ENCODE measurements at regions of chr18 and their contacts with region 1.

Region 1: GRCh38 chr18:59899298-59900221 is at the start of gene PMAIP1:
- DNase-seq: peak; percentile 96
- H3K4me3 Mint-ChIP-seq: peak within 1 kb of the TSS; percentile 95
- H3K27ac Mint-ChIP-seq: peak within 1 kb of the TSS; percentile 99
- H3K4me1 Mint-ChIP-seq: peaks cover 35% of the 10 kb centered on the region
- H3K27me3 Mint-ChIP-seq: no peaks in the 10 kb centered on the region
- total RNA-seq, gene PMAIP1: 52.5 and 54.6 TPM in 2 replicates

Region 2: DNA sequence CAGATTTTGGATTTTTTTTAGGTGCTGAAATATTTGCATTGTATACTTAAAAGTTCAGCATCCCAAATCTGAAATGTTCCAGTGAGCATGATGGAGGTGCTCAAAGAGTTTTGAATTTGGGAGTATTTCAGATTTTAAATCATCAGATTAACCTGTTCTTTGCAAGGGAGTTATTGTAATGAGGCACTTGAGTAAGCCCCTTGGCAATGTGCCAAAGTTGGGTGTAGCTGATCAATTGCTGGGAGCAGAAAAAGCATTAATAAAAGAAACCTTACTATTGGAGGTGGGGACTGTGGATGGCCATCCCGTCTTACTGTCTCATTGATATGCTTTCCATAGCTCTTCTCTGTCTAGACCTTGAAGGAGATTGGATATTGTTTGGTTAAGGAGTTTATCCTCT is 1200.0 kb before region 1 on chr18:
- intact Hi-C with region 1: loop called (anchors 10 kb)
- DNase-seq: peak; percentile 49
- H3K4me3 Mint-ChIP-seq: no peak overlapping the region
- H3K27ac Mint-ChIP-seq: no peak overlapping the region
- H3K4me1 Mint-ChIP-seq: peaks cover 34% of the 10 kb centered on the region
- H3K27me3 Mint-ChIP-seq: no peaks in the 10 kb centered on the region

Region 3: GRCh38 chr18:59358712-59359575 is 540.6 kb before region 1 on chr18 and contains the start of gene LMAN1:
- intact Hi-C with region 1: loop called (anchors 2 kb)
- DNase-seq: peak; percentile 97
- H3K4me3 Mint-ChIP-seq: peak within 1 kb of the TSS; percentile 88
- H3K27ac Mint-ChIP-seq: peak within 1 kb of the TSS; percentile 90
- H3K4me1 Mint-ChIP-seq: peaks cover 34% of the 10 kb centered on the region
- H3K27me3 Mint-ChIP-seq: peaks cover 6% of the 10 kb centered on the region
- total RNA-seq, gene LMAN1: 141 and 148 TPM in 2 replicates

Region 4: DNA sequence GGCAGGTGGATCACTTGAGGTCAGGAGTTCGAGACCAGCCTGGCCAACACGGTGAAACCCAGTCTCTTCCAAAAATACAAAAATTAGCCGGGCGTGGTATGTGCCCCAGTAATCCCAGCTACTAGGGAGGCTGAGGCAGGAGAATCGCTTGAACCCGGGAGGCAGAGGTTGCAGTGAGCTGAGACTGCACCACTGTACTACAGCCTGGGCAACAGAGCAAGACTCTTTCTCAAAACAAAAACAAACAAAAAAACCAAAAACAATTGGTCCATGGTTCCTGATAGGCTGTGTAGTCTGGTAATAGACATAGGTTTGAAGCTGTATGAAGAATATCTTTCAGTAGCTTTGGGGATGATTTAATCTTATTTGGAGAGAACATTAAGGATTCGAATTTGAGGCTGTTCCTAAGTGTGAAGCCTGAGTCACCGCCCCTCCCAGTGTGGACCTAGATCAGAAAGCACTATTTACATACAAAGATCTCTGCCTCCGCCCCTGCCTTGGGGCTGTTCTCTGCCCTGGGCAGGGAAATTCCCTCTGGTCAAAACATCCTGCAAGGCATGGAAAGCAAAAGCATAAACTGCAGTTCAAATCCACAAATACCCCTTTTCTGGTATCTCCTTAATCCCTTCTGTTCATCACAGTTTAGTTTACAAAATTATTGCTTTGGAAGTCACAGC is 52.6 kb before region 1 on chr18:
- intact Hi-C with region 1: loop called (anchors 1 kb)
- DNase-seq: peak; percentile 85
- H3K4me3 Mint-ChIP-seq: peak overlapping the region; percentile 26
- H3K27ac Mint-ChIP-seq: peak overlapping the region; percentile 91
- H3K4me1 Mint-ChIP-seq: peaks cover 21% of the 10 kb centered on the region
- H3K27me3 Mint-ChIP-seq: no peaks in the 10 kb centered on the region

Region 5: GRCh38 chr18:59878644-59879043 is 20.9 kb before region 1 on chr18:
- intact Hi-C with region 1: no loop called
- DNase-seq: no peak
- H3K4me3 Mint-ChIP-seq: no peak overlapping the region
- H3K27ac Mint-ChIP-seq: no peak overlapping the region
- H3K4me1 Mint-ChIP-seq: peaks cover 39% of the 10 kb centered on the region
- H3K27me3 Mint-ChIP-seq: peaks cover 2% of the 10 kb centered on the region

Region 6: GRCh38 chr18:59918320-59918755 is 18.8 kb after region 1 on chr18:
- intact Hi-C with region 1: loop called (anchors 1 kb)
- DNase-seq: no peak
- H3K4me3 Mint-ChIP-seq: peak overlapping the region; percentile 1
- H3K27ac Mint-ChIP-seq: peak overlapping the region; percentile 3
- H3K4me1 Mint-ChIP-seq: peaks cover 21% of the 10 kb centered on the region
- H3K27me3 Mint-ChIP-seq: no peaks in the 10 kb centered on the region

Region 7: DNA sequence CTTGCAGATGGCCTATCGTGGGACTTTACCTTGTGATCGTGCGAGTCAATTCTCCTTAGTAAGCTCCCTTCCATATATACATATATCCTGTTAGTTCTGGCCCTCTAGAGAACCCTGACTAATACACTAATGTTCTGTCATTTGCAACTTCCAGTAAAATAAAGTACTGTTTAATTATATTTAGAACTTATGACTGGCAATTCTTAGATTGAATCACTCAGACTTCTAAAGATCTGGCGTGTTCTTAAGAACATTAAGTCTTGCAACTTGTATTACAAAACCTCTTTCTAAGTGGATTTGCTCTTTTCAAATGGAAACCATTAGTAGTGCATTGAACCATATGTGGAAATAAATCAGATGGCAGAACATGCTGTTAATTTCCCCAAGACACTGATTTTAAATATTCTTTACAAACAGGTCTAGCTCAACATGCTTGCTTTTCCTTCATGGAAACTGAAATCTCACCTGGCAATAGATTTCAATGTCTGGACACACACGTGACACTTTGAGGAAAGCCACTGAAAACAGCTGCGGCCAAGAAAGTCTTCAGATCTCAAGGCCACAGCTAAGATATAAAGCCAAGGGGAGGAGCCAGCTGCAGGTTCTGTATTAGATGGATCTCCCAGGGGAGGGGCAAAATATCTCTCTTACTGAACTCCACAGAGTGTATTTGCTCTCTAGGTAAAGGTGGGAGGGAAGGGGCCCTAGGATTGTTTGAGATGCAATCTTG is 50.8 kb after region 1 on chr18:
- intact Hi-C with region 1: loop called (anchors 1 kb)
- DNase-seq: no peak
- H3K4me3 Mint-ChIP-seq: no peak overlapping the region
- H3K27ac Mint-ChIP-seq: no peak overlapping the region
- H3K4me1 Mint-ChIP-seq: peaks cover 13% of the 10 kb centered on the region
- H3K27me3 Mint-ChIP-seq: peaks cover 6% of the 10 kb centered on the region

Region 8: GRCh38 chr18:60123031-60123430 is 223.5 kb after region 1 on chr18:
- intact Hi-C with region 1: no loop called
- DNase-seq: no peak
- H3K4me3 Mint-ChIP-seq: no peak overlapping the region
- H3K27ac Mint-ChIP-seq: no peak overlapping the region
- H3K4me1 Mint-ChIP-seq: no peaks in the 10 kb centered on the region
- H3K27me3 Mint-ChIP-seq: no peaks in the 10 kb centered on the region

Region 9: GRCh38 chr18:60391571-60392226 is 492.1 kb after region 1 on chr18:
- intact Hi-C with region 1: no loop called
- DNase-seq: no peak
- H3K4me3 Mint-ChIP-seq: no peak overlapping the region
- H3K27ac Mint-ChIP-seq: no peak overlapping the region
- H3K4me1 Mint-ChIP-seq: no peaks in the 10 kb centered on the region
- H3K27me3 Mint-ChIP-seq: no peaks in the 10 kb centered on the region

Measured in activated CD4-positive, alpha-beta T cell treated with anti-CD3 and anti-CD28 coated beads, Interleukin-2, amount 10 ng/mL, durations not matched to agents 24 days and 14 days (primary cell).